A549 (cell line): ENCODE measurements at regions of chr20 and their contacts with region 1.

Region 1: DNA sequence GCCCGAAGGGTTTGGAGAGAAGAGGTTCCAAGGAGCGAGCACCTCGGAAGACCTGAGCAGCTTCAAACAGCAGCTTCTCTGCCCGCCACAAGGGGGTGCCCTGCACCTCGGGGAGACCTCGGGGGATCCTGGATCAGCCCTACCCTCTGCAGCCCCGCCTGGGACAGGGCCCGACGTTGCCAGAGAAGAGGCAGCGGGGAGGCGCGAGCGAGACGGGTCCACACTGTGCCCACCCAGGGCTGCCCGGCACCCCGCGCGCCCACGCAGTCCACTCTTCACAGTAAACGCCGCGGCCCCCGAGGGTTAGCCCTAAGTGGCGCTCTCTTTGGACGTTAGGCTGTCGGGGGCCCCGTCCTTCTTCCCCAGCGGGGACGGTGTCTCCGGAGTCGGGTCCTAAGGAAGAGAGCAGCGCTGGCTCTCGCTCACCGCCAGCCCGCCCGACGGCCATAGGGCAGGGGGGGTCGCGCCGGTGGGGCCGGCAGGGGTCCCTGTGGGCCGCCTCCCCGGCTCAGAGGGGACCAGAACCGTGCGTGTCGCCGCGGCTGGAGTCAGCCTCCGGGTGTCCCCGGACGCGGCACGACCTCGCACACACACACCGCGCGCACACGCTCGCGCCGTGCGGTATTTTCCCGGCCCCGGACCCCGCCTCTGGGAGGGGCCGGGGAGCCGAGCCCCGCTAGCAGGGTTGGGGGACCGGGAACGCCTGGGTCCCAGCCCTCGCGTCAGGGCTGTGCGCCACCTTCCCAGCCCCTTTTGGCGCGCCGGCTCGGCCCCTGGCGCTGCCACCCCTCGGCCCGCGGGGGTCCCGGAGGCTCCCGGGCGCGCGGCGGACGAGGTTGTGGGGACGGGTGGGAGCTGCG is 929 bp downstream of the CDH22 start:
- DNase-seq: peak; percentile 69 to 87
- ATAC-seq: peak; percentile 65 to 91; a peak in 5 of 6 replicates
- H3K4me3 ChIP-seq: peak overlapping the region; percentile 55
- H3K27ac ChIP-seq: peak overlapping the region in 1 of 2 experiments; percentile 70; a peak in 4 of 6 replicates
- H3K4me1 ChIP-seq: peaks cover 3% of the 10 kb centered on the region
- CTCF ChIP-seq: peak; percentile 74
- EP300 ChIP-seq: no peak
- POLR2A ChIP-seq: no peak
- RAD21 ChIP-seq: peak; percentile 72

Region 2: DNA sequence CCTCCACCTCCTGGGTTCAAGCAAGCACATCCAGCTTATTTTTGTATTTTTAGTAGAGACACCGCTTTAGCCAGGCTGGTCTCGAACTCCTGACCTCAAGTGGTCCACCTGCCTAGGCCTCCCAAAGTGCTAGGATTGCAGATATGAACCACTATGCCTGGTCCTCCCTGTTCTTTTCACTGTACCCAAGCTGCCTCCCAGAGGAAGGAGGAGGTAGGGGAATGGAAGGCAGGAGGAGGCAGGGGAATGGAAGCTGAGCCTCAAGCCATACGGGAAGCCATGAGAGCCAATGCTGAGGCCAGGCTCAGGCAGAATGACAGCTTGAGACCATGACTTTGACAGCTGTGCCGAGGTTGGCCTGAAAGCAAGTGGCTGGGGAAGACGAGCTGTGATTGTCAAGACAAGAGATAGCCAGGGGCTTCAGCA is 321.8 kb before region 1 on chr20:
- CTCF ChIA-PET with region 1: no interaction called
- POLR2A ChIA-PET with region 1: no interaction called
- DNase-seq: peak in 1 of 2 experiments; percentile 52
- ATAC-seq: peak in 1 of 2 experiments; percentile 42; a peak in 3 of 6 replicates
- H3K4me3 ChIP-seq: no peak overlapping the region
- H3K27ac ChIP-seq: no peak overlapping the region
- H3K4me1 ChIP-seq: peaks cover 5% of the 10 kb centered on the region
- CTCF ChIP-seq: no peak
- EP300 ChIP-seq: no peak
- POLR2A ChIP-seq: no peak
- RAD21 ChIP-seq: 0 out of 5 replicates have a peak, but pooled peaks of 1 of the 2 experiments have one; percentile 17

Region 3: GRCh38 chr20:46293084-46293483 is 14.3 kb before region 1 on chr20:
- CTCF ChIA-PET with region 1: interaction called, 46 read pairs
- POLR2A ChIA-PET with region 1: no interaction called
- DNase-seq: peak; percentile 31 to 40
- ATAC-seq: peak; percentile 67 to 75
- H3K4me3 ChIP-seq: no peak overlapping the region
- H3K27ac ChIP-seq: no peak overlapping the region
- H3K4me1 ChIP-seq: no peaks in the 10 kb centered on the region
- CTCF ChIP-seq: no peak
- EP300 ChIP-seq: no peak
- POLR2A ChIP-seq: no peak
- RAD21 ChIP-seq: no peak

Region 4: GRCh38 chr20:46330072-46330763 is 22.8 kb after region 1 on chr20:
- CTCF ChIA-PET with region 1: interaction called, 20 read pairs
- POLR2A ChIA-PET with region 1: no interaction called
- DNase-seq: no peak
- ATAC-seq: no peak
- H3K4me3 ChIP-seq: no peak overlapping the region
- H3K27ac ChIP-seq: no peak overlapping the region
- H3K4me1 ChIP-seq: no peaks in the 10 kb centered on the region
- CTCF ChIP-seq: no peak
- EP300 ChIP-seq: no peak
- POLR2A ChIP-seq: no peak
- RAD21 ChIP-seq: no peak

Region 5: GRCh38 chr20:46363800-46364634 is 56.6 kb after region 1 on chr20:
- CTCF ChIA-PET with region 1: interaction called, 10 read pairs
- POLR2A ChIA-PET with region 1: no interaction called
- DNase-seq: peak; percentile 86 to 88
- ATAC-seq: peak; percentile 96 to 97
- H3K4me3 ChIP-seq: peak overlapping the region; percentile 99
- H3K27ac ChIP-seq: peak overlapping the region; percentile 99
- H3K4me1 ChIP-seq: peaks cover 14% of the 10 kb centered on the region; the same call in 2 of the 3 replicates
- CTCF ChIP-seq: no peak
- EP300 ChIP-seq: no peak
- POLR2A ChIP-seq: peak; percentile 70
- RAD21 ChIP-seq: no peak

Region 6: DNA sequence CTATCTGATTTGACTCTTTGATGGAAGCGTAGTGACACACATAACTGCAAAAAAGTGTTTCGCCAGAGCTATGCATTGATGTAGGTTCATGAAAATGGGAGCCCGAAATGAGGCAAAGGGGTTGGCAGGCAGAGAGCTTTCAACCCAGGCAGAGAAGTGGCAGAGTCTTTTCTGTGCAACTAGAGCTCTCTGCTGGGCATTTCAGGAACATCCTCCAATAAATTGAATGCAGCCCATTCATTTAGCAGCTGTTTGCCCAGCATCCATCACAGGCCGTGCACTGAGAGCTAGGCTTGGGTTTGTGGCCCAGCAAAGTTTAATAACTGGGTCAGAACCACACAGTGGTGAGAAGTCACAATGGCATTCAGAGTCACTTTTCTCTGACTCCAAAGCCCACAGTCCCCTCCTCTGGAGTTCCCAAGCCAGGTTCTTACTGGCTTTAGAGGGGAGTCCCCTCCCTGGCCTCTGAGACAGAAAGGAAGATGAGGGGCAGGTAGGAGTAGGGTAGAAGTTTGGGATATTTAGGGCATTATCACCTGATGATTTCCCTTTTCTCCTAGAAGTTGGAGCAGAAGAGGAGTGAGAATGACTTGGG is 130.9 kb after region 1 on chr20:
- CTCF ChIA-PET with region 1: interaction called, 21 read pairs
- POLR2A ChIA-PET with region 1: interaction called, 3 read pairs
- DNase-seq: peak; percentile 50 to 65
- ATAC-seq: peak; percentile 91 to 92
- H3K4me3 ChIP-seq: no peak overlapping the region
- H3K27ac ChIP-seq: no peak overlapping the region
- H3K4me1 ChIP-seq: no peaks in the 10 kb centered on the region
- CTCF ChIP-seq: peak; percentile 49
- EP300 ChIP-seq: no peak
- POLR2A ChIP-seq: no peak
- RAD21 ChIP-seq: peak; percentile 64 to 72